ENCODE measurements at regions of chr20 and their contacts with region 1.

Region 1: DNA sequence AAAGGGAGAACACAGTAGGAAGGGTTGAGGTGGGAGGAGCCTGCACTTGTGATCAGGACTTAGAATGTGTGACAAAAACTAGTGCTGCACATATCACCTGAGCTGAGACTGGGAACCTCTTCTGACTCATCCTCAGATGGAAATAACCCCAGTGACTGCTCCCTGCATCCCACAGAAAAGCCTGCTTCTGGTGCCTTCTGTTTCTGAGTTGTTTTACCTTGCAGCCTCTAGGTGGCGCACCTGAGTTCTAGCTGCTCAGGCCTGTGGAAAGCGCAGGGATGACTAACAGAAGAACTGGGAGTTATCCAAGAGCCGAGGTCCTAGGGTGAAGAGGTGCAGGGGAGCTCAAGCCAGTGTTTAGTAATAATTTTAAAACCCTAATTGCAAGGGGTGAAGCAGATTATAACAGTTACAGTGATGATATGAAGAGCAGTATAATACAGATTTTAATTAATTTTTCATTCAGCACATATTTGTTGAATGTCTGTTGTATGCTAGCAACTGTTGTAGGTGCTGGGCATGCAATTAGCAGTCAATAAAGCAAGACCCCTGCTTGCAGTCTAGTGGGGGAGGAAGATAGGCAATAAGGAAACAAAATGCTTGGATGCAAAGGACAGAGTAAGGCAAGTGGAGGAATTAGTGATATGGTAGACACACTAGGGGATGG is 302.5 kb downstream of the DHX35 start:
- DNase-seq: peak; percentile 69
- ATAC-seq: peak; percentile 69 to 78

Region 2: DNA sequence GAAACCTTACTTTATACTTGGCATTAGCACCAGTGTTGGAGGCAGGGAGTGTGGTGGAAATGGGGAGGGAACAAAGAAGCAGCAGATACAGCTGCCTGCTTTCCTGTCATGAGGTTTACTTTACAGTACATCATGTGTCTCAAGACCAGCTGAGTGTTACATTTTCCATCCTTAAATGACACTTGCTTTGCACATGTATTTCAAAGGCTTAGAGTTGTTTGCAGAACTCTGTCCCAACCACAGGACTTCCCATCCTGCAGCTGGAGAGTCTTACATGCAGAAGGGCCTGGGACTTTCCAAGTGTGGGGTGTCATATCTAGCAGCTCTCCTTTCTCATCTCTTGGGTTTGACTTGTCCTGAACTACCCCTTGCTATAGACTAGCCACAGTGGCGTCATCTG is 93.4 kb after region 1 on chr20:
- intact Hi-C with region 1: no loop called
- DNase-seq: no peak
- ATAC-seq: peak; percentile 30 to 68

Region 3: DNA sequence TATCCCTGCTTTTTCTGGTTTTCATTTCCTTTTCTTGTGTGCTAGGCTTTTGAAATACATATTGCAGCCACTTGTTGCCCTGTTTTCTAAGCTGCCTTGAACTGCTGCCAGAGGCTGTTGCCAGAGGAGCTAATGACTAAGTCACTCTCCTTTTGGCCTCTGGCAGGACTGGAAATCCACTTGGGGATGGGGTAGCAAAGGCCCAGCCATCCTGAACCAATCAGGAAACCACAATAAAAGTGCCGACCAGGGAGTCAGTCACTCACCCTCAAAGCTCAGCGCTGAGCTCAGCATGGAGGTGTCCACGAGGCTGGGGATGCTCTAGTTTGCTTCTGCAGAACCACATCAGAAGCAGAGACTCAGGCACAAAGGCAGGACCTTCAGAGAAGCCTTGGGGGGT is 510.5 kb after region 1 on chr20:
- intact Hi-C with region 1: no loop called
- DNase-seq: peak; percentile 83
- ATAC-seq: peak; percentile 65 to 90

Region 4: DNA sequence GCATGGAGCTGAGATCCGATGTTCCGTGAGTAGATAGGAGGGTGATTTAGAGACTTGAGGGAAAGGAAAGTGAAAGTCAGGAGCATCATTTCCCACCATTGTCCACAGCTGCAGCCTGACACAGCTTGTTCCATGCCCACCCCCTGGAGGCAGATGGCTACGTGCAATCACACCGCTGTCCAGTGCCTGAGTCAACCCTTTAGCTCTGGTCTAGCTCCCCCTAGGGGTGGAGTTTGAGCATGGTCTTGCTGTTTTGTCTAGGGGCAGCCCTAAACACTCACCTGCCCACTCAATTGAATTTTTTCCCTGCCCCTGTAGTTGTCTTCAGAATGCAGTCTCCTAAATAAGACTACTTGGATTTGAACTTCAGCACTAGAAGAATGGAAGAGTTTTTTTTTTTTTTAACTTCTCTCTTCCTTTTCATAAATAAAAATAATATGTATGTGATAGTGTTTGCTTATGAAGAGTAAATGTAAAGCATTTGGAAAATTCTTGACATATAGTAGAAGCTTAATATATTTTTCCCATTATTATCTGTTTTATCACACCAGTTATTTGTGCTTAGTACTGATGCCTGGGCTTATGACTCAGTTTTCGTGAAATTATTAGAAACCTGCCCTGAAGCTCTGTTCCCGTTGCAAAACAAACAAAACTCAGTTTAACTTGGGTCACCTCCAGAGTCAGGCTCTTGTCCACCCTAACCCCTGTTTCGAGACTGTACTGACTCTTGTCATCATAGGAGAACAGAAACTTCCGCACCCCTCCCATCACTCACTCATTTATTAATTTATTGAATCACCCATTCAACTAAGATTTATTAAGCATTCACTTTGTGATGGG is 609.6 kb after region 1 on chr20:
- intact Hi-C with region 1: loop called (anchors 2 to 10 kb)
- DNase-seq: peak; percentile 85
- ATAC-seq: peak; percentile 93 to 96

Measured in left cardiac atrium (tissue), 4 donors.